Activated naive CD4-positive, alpha-beta T cell treated with anti-CD3 and anti-CD28 coated beads for 36 hours (primary cell): ENCODE measurements at regions of chr11 and their contacts with region 1.

Region 1: DNA sequence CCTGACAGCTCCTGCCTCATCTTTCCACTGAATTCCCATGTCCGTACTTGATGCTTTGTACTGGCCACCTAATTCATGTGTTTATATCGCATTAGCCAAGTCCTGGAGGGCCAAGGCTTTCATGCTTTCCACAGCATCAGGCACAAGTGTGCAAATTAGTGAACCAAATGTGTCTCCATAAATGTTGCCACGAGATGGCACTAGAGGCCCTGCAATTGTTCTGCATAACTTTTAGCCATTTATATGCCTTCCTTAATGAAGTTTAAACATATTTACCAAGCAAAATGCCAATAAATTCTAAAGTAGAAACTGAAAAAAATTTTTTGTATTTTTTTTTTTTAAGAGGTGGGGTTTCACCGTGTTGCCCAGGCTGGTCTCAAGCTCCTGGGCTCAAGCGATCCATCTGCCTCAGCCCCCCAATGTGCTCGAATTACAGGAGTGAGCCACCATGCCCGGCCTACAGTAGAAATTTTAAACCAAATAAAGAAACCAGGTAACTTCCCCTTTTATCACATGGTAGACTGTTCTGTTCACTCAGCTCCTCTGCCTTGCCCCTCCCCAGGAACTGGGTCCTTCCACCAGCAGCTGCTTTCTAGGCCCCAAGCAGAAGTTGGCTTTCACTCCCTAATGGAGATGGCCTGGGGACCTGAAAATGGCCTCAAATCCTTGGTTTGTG is 20.8 kb upstream of the IL18BP start:
- DNase-seq: peak; percentile 72
- H3K4me3 Mint-ChIP-seq: no peak overlapping the region
- H3K27ac Mint-ChIP-seq: no peak overlapping the region
- H3K4me1 Mint-ChIP-seq: no peaks in the 10 kb centered on the region
- H3K27me3 Mint-ChIP-seq: no peaks in the 10 kb centered on the region

Region 2: DNA sequence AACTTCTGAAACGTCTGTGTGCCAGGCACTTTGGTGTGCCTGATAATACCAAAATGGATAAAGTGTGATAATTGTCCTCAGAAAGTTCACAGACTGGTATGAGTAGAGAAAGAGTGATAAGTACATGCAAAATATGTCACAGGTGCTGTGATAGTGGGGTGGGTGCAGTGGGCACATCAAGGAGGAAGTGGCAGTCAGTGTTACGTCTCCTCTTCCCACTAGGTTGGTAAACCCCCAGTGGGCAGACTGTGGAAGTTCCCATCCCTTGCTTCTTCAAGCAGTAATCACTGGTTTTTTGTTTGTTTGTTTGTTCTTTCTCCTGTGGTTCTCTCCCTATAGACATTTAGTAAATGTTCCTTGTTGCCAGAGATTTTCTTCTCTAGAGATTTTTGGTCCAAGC is 43.7 kb before region 1 on chr11:
- CTCF ChIA-PET with region 1: no interaction called
- intact Hi-C with region 1: no loop called
- DNase-seq: peak; percentile 19
- H3K4me3 Mint-ChIP-seq: no peak overlapping the region
- H3K27ac Mint-ChIP-seq: no peak overlapping the region
- H3K4me1 Mint-ChIP-seq: peaks cover 55% of the 10 kb centered on the region
- H3K27me3 Mint-ChIP-seq: no peaks in the 10 kb centered on the region

Region 3: DNA sequence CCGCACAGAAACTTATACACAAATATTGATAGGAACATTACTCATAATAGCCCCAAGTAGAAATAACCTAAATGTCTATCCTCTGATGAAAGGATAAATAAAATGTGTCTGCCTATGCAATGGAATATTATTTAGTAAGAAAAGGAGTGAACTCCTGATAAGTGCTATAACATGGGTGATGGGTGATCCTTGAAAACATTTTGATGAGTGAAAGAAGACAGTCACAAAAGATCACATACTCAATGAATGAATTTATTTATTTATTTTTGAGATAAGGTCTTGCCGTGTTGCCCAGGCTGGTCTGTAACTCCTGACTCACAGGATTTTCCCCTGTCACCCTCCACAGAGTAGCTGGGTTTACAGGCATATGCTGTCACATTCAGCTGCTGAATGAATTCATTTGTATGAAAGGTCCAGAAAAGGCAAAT is 31.7 kb before region 1 on chr11:
- CTCF ChIA-PET with region 1: interaction called, 14 read pairs
- intact Hi-C with region 1: no loop called
- DNase-seq: peak; percentile 13
- H3K4me3 Mint-ChIP-seq: no peak overlapping the region
- H3K27ac Mint-ChIP-seq: peak overlapping the region; percentile 28
- H3K4me1 Mint-ChIP-seq: peaks cover 18% of the 10 kb centered on the region
- H3K27me3 Mint-ChIP-seq: no peaks in the 10 kb centered on the region

Region 4: GRCh38 chr11:71988050-71988449 is 10.2 kb after region 1 on chr11:
- CTCF ChIA-PET with region 1: interaction called, 29 read pairs
- intact Hi-C with region 1: no loop called
- DNase-seq: no peak
- H3K4me3 Mint-ChIP-seq: no peak overlapping the region
- H3K27ac Mint-ChIP-seq: no peak overlapping the region
- H3K4me1 Mint-ChIP-seq: peaks cover 3% of the 10 kb centered on the region
- H3K27me3 Mint-ChIP-seq: no peaks in the 10 kb centered on the region

Region 5: DNA sequence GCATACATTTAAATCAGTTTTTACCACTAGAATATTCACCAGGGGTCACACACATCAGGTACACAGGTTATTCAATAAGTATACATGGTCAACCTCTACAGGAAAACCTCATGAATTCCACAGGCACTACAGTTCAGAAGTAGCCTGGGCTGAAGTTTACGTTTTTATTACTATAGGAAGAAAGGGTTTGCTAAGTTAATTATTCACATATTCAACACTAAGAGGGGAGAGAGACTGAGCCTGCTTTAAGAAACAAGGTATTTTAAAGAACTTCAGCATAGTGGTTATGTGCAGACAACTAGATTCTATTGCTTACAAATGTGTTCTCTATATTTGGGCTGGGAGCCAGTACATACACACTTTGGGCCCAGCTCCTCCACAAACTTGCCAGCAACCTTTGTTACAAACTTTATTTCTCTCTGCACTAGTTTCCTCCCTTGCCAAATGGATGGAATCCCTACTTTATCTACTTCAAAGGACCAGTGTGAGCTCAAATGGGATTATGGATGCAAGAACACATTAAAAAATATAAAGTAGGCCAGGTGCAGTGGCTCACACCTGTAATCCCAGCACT is 52.7 kb after region 1 on chr11:
- CTCF ChIA-PET with region 1: interaction called, 20 read pairs
- intact Hi-C with region 1: no loop called
- DNase-seq: no peak
- H3K4me3 Mint-ChIP-seq: no peak overlapping the region
- H3K27ac Mint-ChIP-seq: peak overlapping the region; percentile 13
- H3K4me1 Mint-ChIP-seq: peaks cover 42% of the 10 kb centered on the region
- H3K27me3 Mint-ChIP-seq: no peaks in the 10 kb centered on the region

Region 6: GRCh38 chr11:72112321-72113219 is 134.7 kb after region 1 on chr11 and contains the start of gene ANAPC15:
- CTCF ChIA-PET with region 1: no interaction called
- intact Hi-C with region 1: no loop called
- DNase-seq: peak; percentile 100
- H3K4me3 Mint-ChIP-seq: peak within 1 kb of the TSS; percentile 85
- H3K27ac Mint-ChIP-seq: peak within 1 kb of the TSS; percentile 97
- H3K4me1 Mint-ChIP-seq: peaks cover 12% of the 10 kb centered on the region
- H3K27me3 Mint-ChIP-seq: no peaks in the 10 kb centered on the region
- total RNA-seq, gene ANAPC15: 69.1 to 70.3 TPM

Region 7: DNA sequence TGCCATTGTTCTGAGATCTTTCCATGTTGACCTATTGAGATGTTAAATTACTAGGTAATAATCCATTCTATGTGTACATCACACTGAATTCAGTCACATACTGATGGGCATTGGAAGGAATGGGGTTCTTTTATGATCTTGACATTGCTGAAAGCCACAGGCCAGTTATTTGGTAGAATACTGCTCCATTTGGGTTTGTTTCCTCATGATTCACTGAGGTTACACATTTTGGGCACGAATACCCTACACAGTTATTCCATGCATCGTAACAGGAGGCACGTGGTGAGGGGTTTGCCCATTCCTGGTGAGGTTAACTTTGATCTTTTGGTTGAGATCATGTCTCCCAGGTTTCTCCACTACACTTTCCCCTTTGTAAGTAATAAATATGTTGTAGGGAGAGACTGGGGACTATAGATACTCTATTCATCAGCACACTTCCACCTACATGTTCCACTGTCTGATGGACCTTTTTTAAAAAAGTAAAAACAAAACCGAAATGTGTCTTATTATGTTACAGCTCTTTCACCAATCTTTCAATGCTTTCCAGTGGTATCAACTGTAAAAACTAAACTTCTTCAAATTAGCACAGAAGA is 202.0 kb after region 1 on chr11:
- CTCF ChIA-PET with region 1: interaction called, 3 read pairs
- intact Hi-C with region 1: loop called (anchors 2 kb)
- DNase-seq: no peak
- H3K4me3 Mint-ChIP-seq: no peak overlapping the region
- H3K27ac Mint-ChIP-seq: no peak overlapping the region
- H3K4me1 Mint-ChIP-seq: peaks cover 7% of the 10 kb centered on the region
- H3K27me3 Mint-ChIP-seq: no peaks in the 10 kb centered on the region

Region 8: DNA sequence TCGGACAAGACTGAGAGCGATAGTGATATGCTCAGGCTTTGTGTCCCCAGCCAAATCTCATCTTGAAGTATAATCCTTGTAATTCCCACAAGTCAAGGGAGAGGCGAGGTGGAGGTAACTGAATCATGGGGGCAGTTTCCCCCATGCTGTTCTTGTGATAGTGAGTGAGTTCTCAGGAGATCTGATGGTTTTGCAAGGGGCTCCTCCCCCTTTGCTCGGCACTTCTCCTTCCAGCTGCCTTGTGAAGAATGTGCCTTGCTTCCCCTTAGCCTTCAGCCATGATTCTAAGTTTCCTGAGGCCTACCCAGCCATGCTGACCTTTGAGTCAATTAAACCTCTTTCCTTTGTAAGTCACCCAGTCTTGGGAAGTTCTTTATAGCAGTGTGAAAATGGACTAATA is 231.2 kb after region 1 on chr11:
- CTCF ChIA-PET with region 1: no interaction called
- intact Hi-C with region 1: no loop called
- DNase-seq: no peak
- H3K4me3 Mint-ChIP-seq: no peak overlapping the region
- H3K27ac Mint-ChIP-seq: no peak overlapping the region
- H3K4me1 Mint-ChIP-seq: no peaks in the 10 kb centered on the region
- H3K27me3 Mint-ChIP-seq: peaks cover 4% of the 10 kb centered on the region